Heart right ventricle (tissue), 16 donors: ENCODE measurements at regions of chr5 and their contacts with region 1.

Region 1: DNA sequence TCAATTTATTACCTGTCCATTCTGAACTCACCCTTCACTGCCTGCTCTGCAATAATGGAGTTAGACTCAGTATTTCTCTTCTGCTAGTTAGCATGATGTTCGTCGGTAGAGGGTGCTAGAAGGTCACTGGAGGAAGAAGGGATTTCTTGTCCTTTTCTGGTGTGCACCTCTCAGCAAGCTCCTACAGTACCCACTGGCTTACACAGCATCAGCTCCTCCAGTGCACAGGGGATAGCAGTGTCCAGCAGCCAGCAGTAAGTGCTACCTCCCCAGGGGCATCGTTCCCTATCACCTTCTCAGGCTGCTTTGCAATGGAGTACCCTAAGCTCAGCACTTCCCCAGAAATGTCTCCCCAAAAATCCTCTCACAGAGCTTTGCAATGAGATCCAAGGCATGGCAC is 45.9 kb upstream of the APC start:
- DNase-seq: no peak
- ATAC-seq: peak in 2 of 8 donors; percentile 41 to 70
- H3K4me3 ChIP-seq: no peak overlapping the region
- H3K27ac ChIP-seq: no peak overlapping the region
- H3K4me1 ChIP-seq: peaks cover 0 to 2% (median 0%) of the 10 kb centered on the region in 9 donors
- H3K27me3 ChIP-seq: peaks cover 0 to 4% (median 0%) of the 10 kb centered on the region in 7 donors
- CTCF ChIP-seq: peak in 3 of 9 donors; percentile 16 to 34 (median 22)

Region 2: GRCh38 chr5:112757468-112758208 is 65.9 kb after region 1 on chr5:
- intact Hi-C with region 1: loop called in 4 of 10 experiments (anchors 5 to 10 kb)
- DNase-seq: no peak
- ATAC-seq: peak in 7 of 8 donors; percentile 69 to 86 (median 78)
- H3K4me3 ChIP-seq: no peak overlapping the region
- H3K27ac ChIP-seq: peak overlapping the region in 1 of 10 donors; percentile 58
- H3K4me1 ChIP-seq: peaks cover 0 to 14% (median 6%) of the 10 kb centered on the region in 9 donors
- H3K27me3 ChIP-seq: no peaks in the 10 kb centered on the region
- CTCF ChIP-seq: peak; percentile 70 to 90 (median 80)